ENCODE measurements at regions of chr6 and their contacts with region 1.

Region 1: DNA sequence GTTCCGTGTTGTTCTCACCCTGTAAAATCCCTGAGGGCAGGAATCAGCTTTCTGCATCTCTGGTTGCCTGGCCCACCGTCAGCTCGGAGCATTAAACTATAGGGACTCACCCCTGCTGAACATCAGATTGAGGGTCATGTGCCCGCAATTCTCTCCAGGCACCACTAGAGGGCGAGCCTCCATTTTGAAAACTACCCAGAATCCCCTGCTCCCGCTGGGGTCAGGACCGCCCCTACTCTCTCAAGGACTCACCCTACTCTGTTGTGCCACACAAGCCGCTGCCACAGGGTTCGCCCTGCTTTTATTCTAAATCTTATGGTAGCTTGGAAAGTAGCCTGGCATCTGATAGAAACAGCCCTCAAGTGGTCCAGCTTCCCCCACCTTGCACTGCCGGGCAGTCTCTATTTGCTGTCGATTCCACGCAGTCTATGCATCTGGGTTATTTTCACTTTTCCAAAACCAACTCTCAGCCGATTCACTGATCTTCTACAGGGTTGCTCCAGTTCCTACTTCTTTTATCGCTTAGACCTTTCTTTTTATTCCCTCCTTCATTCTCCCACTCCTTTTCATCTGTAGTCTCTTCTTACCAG is 244.1 kb upstream of the QKI start:
- DNase-seq: no peak
- ATAC-seq: peak; percentile 58
- H3K4me3 Mint-ChIP-seq: no peak overlapping the region
- H3K27ac Mint-ChIP-seq: no peak overlapping the region
- H3K4me1 Mint-ChIP-seq: no peaks in the 10 kb centered on the region
- H3K27me3 Mint-ChIP-seq: peaks cover 4% of the 10 kb centered on the region
- CTCF ChIP-seq: no peak

Region 2: DNA sequence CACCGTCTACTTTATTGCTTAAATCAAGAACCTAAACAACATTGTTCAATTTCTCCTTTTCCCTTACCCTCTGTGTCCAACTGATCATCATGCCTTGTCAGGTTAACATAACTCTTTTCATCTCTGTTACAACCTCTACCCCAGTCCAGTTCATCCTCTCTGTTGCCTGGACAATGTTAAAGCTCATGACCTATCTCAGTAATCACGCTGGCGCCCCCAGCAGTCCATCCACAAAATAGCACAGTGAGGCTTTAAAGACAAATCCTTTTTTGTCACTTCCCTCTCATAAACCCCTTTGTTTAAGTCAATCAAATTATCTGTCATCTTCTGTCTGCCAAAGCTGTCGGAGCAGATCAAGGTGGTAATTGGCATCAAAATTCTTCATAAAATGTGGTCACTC is 384.3 kb after region 1 on chr6:
- CTCF ChIA-PET with region 1: no interaction called
- POLR2A ChIA-PET with region 1: no interaction called
- intact Hi-C with region 1: loop called (anchors 10 kb)
- DNase-seq: no peak
- ATAC-seq: no peak
- H3K4me3 Mint-ChIP-seq: no peak overlapping the region
- H3K27ac Mint-ChIP-seq: no peak overlapping the region
- H3K4me1 Mint-ChIP-seq: no peaks in the 10 kb centered on the region
- H3K27me3 Mint-ChIP-seq: no peaks in the 10 kb centered on the region
- CTCF ChIP-seq: peak; percentile 17

Measured in activated B cell treated with CpG ODN at 0.5 μM for 24 hours (primary cell).